ENCODE measurements at regions of chr2 and their contacts with region 1.

Region 1: GRCh38 chr2:162301151-162301804 is 17.2 kb downstream of the IFIH1 start:
- DNase-seq: no peak
- ATAC-seq: peak; percentile 84
- H3K4me3 ChIP-seq: no peak overlapping the region
- H3K27ac ChIP-seq: no peak overlapping the region
- H3K4me1 ChIP-seq: no peaks in the 10 kb centered on the region
- H3K27me3 ChIP-seq: no peaks in the 10 kb centered on the region
- CTCF ChIP-seq: peak; percentile 57 to 83 (median 79)
- EP300 ChIP-seq: no peak
- POLR2A ChIP-seq: no peak
- RAD21 ChIP-seq: peak; percentile 59

Region 2: DNA sequence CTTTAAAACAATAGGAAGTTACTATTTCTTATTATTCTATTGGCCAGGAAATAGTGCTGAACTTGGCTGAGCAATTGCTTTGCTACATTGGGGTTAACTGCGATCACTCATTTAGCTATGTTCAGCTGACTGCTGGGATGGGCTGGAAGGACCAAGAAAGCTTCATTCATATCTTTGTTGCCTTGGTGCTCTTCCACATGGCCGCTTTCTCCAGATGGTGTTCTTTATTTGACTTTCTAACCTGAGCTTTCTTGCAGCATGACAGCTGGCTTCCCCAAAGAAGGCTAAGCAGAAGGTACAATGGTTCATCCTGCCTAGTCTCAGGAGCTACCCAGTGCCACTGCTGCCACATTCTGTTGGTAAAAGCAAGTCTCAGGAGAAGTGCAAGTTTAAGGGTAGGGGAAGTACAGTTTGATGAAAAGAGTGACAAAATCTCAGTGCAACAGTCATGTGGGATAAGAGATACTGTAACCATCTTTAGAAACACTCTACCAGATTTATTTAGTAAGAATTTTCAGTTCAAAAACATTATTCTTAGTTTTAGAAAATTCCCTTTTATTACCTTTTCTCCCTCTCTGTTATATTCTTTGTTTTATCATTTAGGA is 1627.0 kb before region 1 on chr2:
- CTCF ChIA-PET with region 1: no interaction called
- POLR2A ChIA-PET with region 1: no interaction called
- RAD21 ChIA-PET with region 1: no interaction called
- SMC1A ChIA-PET with region 1: no interaction called
- in situ Hi-C with region 1: no loop called
- intact Hi-C with region 1: no loop called
- DNase-seq: no peak
- ATAC-seq: no peak
- H3K4me3 ChIP-seq: no peak overlapping the region
- H3K27ac ChIP-seq: no peak overlapping the region
- H3K4me1 ChIP-seq: no peaks in the 10 kb centered on the region
- H3K27me3 ChIP-seq: no peaks in the 10 kb centered on the region
- CTCF ChIP-seq: no peak
- EP300 ChIP-seq: no peak
- POLR2A ChIP-seq: no peak
- RAD21 ChIP-seq: no peak

Region 3: DNA sequence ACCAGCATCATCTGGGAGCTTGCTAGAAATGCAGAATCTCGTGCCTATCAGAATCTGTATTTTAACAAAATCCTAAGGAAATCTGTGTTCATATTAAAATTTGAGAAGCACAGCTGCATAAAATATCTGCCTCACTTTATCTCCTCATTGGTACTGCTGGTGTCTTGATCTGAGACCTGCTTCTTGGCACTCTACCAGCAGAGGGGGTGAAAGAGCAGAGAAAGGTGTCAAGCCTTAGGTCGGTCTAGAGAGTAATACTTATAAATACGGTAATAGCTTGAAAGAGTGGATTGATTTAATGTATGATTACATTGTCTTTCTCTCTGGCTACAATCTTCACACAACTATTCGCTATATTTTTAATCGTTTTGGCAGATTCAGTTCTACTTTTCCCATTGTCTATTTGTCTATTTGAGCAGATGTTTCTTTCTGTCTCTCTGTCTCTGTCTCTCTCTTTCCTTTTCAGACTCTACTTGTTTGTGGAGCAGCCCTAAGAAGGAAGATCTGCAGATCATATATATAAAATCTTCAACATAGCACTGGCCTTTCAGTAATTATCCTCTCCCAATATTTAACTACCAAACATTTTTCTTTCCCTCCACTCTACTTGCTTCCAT is 147.6 kb before region 1 on chr2:
- CTCF ChIA-PET with region 1: interaction called, 28 read pairs
- POLR2A ChIA-PET with region 1: no interaction called
- RAD21 ChIA-PET with region 1: interaction called, 6 read pairs
- SMC1A ChIA-PET with region 1: interaction called, 6 read pairs
- in situ Hi-C with region 1: loop called (anchors 5 kb)
- intact Hi-C with region 1: loop called (anchors 1 kb)
- DNase-seq: no peak
- ATAC-seq: peak; percentile 99
- H3K4me3 ChIP-seq: no peak overlapping the region
- H3K27ac ChIP-seq: no peak overlapping the region
- H3K4me1 ChIP-seq: no peaks in the 10 kb centered on the region
- H3K27me3 ChIP-seq: no peaks in the 10 kb centered on the region
- CTCF ChIP-seq: peak; percentile 80 to 90 (median 86)
- EP300 ChIP-seq: no peak
- POLR2A ChIP-seq: no peak
- RAD21 ChIP-seq: peak; percentile 70

Region 4: DNA sequence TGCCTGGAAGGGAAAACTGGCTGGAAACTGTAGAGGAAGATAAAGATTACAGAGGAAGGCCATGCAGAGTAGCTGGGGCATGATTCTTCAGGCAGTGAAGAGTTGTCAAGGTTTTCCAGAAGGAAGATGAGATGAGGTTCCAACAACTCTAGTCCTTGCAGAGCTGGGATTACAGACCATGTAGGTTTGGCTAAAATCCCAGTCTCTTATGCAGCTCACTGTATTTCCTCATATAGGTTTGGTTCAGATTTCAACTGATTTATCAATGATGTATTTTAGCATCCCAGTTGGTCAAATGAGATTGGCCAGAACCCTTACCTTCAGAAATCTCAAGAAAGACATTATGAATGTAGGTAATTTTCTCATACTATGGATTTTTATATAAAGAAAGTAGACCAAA is 74.4 kb before region 1 on chr2:
- CTCF ChIA-PET with region 1: interaction called, 228 read pairs
- POLR2A ChIA-PET with region 1: no interaction called
- RAD21 ChIA-PET with region 1: interaction called, 79 read pairs
- SMC1A ChIA-PET with region 1: interaction called, 81 read pairs
- in situ Hi-C with region 1: loop called (anchors 5 kb)
- intact Hi-C with region 1: no loop called
- DNase-seq: no peak
- ATAC-seq: no peak
- H3K4me3 ChIP-seq: no peak overlapping the region
- H3K27ac ChIP-seq: no peak overlapping the region
- H3K4me1 ChIP-seq: no peaks in the 10 kb centered on the region
- H3K27me3 ChIP-seq: no peaks in the 10 kb centered on the region
- CTCF ChIP-seq: no peak
- EP300 ChIP-seq: no peak
- POLR2A ChIP-seq: no peak
- RAD21 ChIP-seq: no peak

Region 5: DNA sequence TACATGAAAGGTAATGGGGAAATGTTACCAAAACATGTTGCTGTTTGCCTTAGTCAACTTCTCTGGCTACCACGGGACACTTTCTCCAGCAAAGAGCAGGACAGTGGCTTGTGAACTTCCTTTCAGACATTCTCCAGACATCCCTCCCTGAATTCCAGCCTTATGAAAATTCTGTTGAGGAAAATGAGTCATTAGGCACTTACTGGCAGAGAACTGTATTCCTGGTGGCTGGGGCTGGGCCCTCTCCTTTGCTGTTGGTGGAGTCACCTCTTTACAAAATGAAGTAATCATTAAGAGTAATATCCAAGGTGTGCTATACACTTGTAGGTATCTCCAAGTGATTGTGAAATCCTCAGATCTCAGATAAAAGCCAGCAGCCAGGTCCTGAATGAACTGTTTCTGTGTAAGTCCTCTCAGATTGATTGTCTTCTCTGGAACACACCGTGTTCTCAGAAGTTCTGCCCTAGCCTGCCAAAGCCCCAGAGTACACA is 56.7 kb before region 1 on chr2:
- CTCF ChIA-PET with region 1: interaction called, 10 read pairs
- POLR2A ChIA-PET with region 1: no interaction called
- RAD21 ChIA-PET with region 1: no interaction called
- SMC1A ChIA-PET with region 1: interaction called, 4 read pairs
- in situ Hi-C with region 1: no loop called
- intact Hi-C with region 1: no loop called
- DNase-seq: no peak
- ATAC-seq: no peak
- H3K4me3 ChIP-seq: no peak overlapping the region
- H3K27ac ChIP-seq: no peak overlapping the region
- H3K4me1 ChIP-seq: no peaks in the 10 kb centered on the region
- H3K27me3 ChIP-seq: peaks cover 0 to 4% of the 10 kb centered on the region in 2 experiments; a peak in 2 of 4 replicates
- CTCF ChIP-seq: no peak
- EP300 ChIP-seq: no peak
- POLR2A ChIP-seq: no peak
- RAD21 ChIP-seq: no peak

Region 6: GRCh38 chr2:162318328-162319180 is 17.3 kb after region 1 on chr2 and contains the start of gene IFIH1:
- CTCF ChIA-PET with region 1: interaction called, 316 read pairs
- POLR2A ChIA-PET with region 1: interaction called, 12 read pairs
- RAD21 ChIA-PET with region 1: interaction called, 50 read pairs
- SMC1A ChIA-PET with region 1: interaction called, 18 read pairs
- in situ Hi-C with region 1: no loop called
- intact Hi-C with region 1: no loop called
- DNase-seq: peak; percentile 94
- ATAC-seq: peak; percentile 89
- H3K4me3 ChIP-seq: peak within 1 kb of the TSS; percentile 90
- H3K27ac ChIP-seq: peak within 1 kb of the TSS; percentile 98
- H3K4me1 ChIP-seq: no peaks in the 10 kb centered on the region
- H3K27me3 ChIP-seq: no peaks in the 10 kb centered on the region
- CTCF ChIP-seq: peak; percentile 20 to 29 (median 21); a peak in 3 of 6 replicates
- EP300 ChIP-seq: peak; percentile 57 to 80
- POLR2A ChIP-seq: peak; percentile 80
- RAD21 ChIP-seq: 0 out of 2 replicates have a peak, but pooled peaks have one; percentile 7
- polyA plus RNA-seq, gene IFIH1: 12.5 to 16.4 TPM

Region 7: DNA sequence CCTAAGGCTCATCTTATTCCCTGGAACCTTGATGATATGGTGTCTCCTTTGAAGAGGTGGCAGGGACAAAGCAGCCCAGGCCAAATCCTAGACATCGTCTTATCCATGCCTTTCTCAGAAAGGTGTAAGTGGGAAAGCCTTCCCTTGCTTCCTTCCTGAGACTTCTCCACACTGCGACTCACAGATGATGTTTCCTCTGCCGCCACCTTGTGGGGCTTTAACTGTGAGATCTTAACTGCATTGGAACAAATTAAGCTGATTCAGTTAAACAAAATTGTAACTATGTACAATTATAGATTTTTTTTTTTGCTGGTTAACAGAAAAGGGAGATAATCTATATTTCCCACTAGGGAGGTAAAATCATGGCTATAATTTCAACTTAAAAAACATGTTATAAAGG is 32.7 kb after region 1 on chr2:
- CTCF ChIA-PET with region 1: interaction called, 194 read pairs
- POLR2A ChIA-PET with region 1: interaction called, 5 read pairs
- RAD21 ChIA-PET with region 1: interaction called, 34 read pairs
- SMC1A ChIA-PET with region 1: interaction called, 84 read pairs
- in situ Hi-C with region 1: no loop called
- intact Hi-C with region 1: no loop called
- DNase-seq: no peak
- ATAC-seq: peak; percentile 91
- H3K4me3 ChIP-seq: no peak overlapping the region
- H3K27ac ChIP-seq: no peak overlapping the region
- H3K4me1 ChIP-seq: no peaks in the 10 kb centered on the region
- H3K27me3 ChIP-seq: no peaks in the 10 kb centered on the region
- CTCF ChIP-seq: peak; percentile 55 to 81 (median 62)
- EP300 ChIP-seq: no peak
- POLR2A ChIP-seq: no peak
- RAD21 ChIP-seq: peak; percentile 71

Region 8: GRCh38 chr2:162390801-162391200 is 89.5 kb after region 1 on chr2:
- CTCF ChIA-PET with region 1: no interaction called
- POLR2A ChIA-PET with region 1: no interaction called
- RAD21 ChIA-PET with region 1: no interaction called
- SMC1A ChIA-PET with region 1: no interaction called
- in situ Hi-C with region 1: no loop called
- intact Hi-C with region 1: no loop called
- DNase-seq: no peak
- ATAC-seq: no peak
- H3K4me3 ChIP-seq: no peak overlapping the region
- H3K27ac ChIP-seq: no peak overlapping the region
- H3K4me1 ChIP-seq: no peaks in the 10 kb centered on the region
- H3K27me3 ChIP-seq: no peaks in the 10 kb centered on the region; a peak in 1 of 4 replicates
- CTCF ChIP-seq: no peak
- EP300 ChIP-seq: no peak
- POLR2A ChIP-seq: no peak
- RAD21 ChIP-seq: no peak

Region 9: DNA sequence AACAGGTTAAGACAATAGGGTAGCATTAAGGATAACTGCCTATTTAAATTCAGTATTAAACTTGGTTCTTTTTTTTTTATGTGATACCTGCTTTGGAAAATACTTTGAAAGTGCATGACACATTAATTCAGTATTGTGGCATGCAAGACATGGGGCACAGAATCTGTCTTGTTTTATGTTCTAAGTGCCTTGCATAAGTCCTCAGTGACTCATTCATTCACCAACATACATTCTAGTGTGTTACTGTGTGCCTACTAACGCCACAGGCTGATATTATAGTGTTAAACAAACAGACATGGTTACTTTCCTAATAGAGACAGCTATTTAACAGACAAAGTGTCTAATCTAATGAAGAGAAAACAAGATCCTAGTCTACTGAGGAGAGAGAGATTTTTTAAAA is 134.4 kb after region 1 on chr2:
- CTCF ChIA-PET with region 1: no interaction called
- POLR2A ChIA-PET with region 1: no interaction called
- RAD21 ChIA-PET with region 1: no interaction called
- SMC1A ChIA-PET with region 1: no interaction called
- in situ Hi-C with region 1: no loop called
- intact Hi-C with region 1: no loop called
- DNase-seq: no peak
- ATAC-seq: no peak
- H3K4me3 ChIP-seq: no peak overlapping the region
- H3K27ac ChIP-seq: no peak overlapping the region
- H3K4me1 ChIP-seq: no peaks in the 10 kb centered on the region
- H3K27me3 ChIP-seq: no peaks in the 10 kb centered on the region
- CTCF ChIP-seq: no peak
- EP300 ChIP-seq: no peak
- POLR2A ChIP-seq: no peak
- RAD21 ChIP-seq: no peak